ENCODE measurements at regions of chr12 and their contacts with region 1.

Region 1: GRCh38 chr12:53701518-53702260 is 25.6 kb downstream of the CALCOCO1 start:
- DNase-seq: peak; percentile 80 to 92 (median 86)
- H3K4me3 ChIP-seq: no peak overlapping the region
- H3K27ac ChIP-seq: no peak overlapping the region
- H3K4me1 ChIP-seq: no peaks in the 10 kb centered on the region
- H3K27me3 ChIP-seq: peaks cover 36% of the 10 kb centered on the region
- CTCF ChIP-seq: peak; percentile 88 to 96 (median 94)
- POLR2A ChIP-seq: no peak

Region 2: GRCh38 chr12:53746592-53747092 is 45.0 kb after region 1 on chr12:
- intact Hi-C with region 1: loop called (anchors 2 kb)
- DNase-seq: peak; percentile 91 to 97 (median 95)
- H3K4me3 ChIP-seq: no peak overlapping the region
- H3K27ac ChIP-seq: no peak overlapping the region
- H3K4me1 ChIP-seq: peaks cover 11% of the 10 kb centered on the region in 2 donors
- H3K27me3 ChIP-seq: peaks cover 42% of the 10 kb centered on the region
- CTCF ChIP-seq: peak; percentile 100
- POLR2A ChIP-seq: no peak

Region 3: GRCh38 chr12:53766881-53767280 is 65.2 kb after region 1 on chr12:
- intact Hi-C with region 1: no loop called
- DNase-seq: no peak
- H3K4me3 ChIP-seq: no peak overlapping the region
- H3K27ac ChIP-seq: no peak overlapping the region
- H3K4me1 ChIP-seq: no peaks in the 10 kb centered on the region
- H3K27me3 ChIP-seq: peaks cover 32% of the 10 kb centered on the region
- CTCF ChIP-seq: no peak
- POLR2A ChIP-seq: no peak

Region 4: GRCh38 chr12:53961025-53961761 is 259.5 kb after region 1 on chr12:
- intact Hi-C with region 1: loop called in 1 of 2 experiments (anchors 10 kb)
- DNase-seq: no peak
- H3K4me3 ChIP-seq: no peak overlapping the region
- H3K27ac ChIP-seq: no peak overlapping the region
- H3K4me1 ChIP-seq: peaks cover 0 to 3% of the 10 kb centered on the region in 2 donors
- H3K27me3 ChIP-seq: peaks cover 100% of the 10 kb centered on the region
- CTCF ChIP-seq: no peak
- POLR2A ChIP-seq: no peak